MCF 10A (cell line): ENCODE measurements at regions of chr22 and their contacts with region 1.

Region 1: GRCh38 chr22:26502688-26503561 is 9.3 kb downstream of the TFIP11 start:
- DNase-seq: peak; percentile 18
- H3K4me3 Mint-ChIP-seq: no peak overlapping the region
- H3K27ac Mint-ChIP-seq: no peak overlapping the region
- H3K4me1 Mint-ChIP-seq: no peaks in the 10 kb centered on the region
- H3K27me3 Mint-ChIP-seq: no peaks in the 10 kb centered on the region
- CTCF ChIP-seq: peak; percentile 43

Region 2: DNA sequence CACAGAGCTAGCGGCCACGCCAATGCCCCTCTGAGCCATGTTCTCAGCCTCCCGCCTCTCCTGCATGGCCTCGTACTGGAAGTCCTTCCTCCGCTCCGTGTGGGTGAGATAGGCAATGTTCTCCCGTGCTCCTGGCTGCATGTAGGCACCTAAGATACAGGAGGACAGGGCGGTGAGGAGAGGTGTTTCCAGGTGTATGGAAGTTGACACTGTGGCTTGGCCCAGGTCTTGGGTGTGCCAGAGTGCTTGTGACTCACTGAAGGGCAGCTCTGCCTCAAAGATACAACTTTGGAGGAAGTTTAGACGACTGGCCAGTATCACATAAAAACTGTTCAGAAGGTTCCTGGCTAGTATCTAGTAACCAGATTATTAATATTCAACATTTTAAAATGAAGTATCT is 10.7 kb before region 1 on chr22:
- CTCF ChIA-PET with region 1: interaction called, 13 read pairs
- POLR2A ChIA-PET with region 1: interaction called, 5 read pairs
- intact Hi-C with region 1: no loop called
- DNase-seq: no peak
- H3K4me3 Mint-ChIP-seq: no peak overlapping the region
- H3K27ac Mint-ChIP-seq: peak overlapping the region; percentile 67
- H3K4me1 Mint-ChIP-seq: peaks cover 9% of the 10 kb centered on the region
- H3K27me3 Mint-ChIP-seq: no peaks in the 10 kb centered on the region
- CTCF ChIP-seq: no peak